OCI-LY7 (cell line): ENCODE measurements at regions of chr13 and their contacts with region 1.

Region 1: DNA sequence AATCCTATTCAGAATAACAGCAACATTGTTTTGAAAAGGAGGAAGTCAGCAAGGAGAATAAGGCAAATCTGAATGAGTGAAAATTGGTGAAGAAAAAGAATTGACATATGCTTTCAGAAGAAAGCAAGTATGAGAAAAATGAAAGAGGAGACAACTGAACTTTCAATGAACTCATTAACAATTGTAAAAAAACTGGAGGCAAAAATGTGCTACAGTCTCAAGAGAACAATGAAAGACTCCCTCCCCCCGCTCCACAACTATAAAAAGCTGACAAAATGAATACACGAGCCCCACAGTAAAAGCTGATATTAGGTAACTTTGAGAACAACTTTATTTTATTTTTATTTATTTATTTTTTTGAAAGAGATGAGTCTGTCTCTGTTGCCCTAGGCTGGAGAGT is 373.1 kb downstream of the DIAPH3 start:
- DNase-seq: no peak
- H3K4me3 ChIP-seq: no peak overlapping the region
- H3K27ac ChIP-seq: no peak overlapping the region
- H3K4me1 ChIP-seq: no peaks in the 10 kb centered on the region
- CTCF ChIP-seq: no peak

Region 2: DNA sequence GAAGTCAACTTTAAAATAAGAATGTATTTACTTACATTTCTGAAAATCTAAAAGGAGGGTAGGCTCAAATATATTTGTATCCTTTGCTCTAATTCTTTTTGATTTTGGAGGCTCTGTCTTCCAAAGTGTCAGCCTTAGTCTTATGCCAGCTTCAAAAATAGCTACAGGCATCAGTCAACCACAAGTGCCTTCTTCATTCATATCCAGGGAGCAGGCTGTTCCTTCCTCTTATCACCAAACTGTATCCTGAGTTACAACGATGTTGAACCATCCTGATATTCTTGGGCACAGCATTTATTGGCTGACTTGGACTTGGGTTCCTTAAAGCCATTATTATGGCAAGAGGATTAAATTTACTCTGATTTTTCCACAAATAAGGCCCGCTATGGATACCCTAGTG is 997.8 kb before region 1 on chr13:
- CTCF ChIA-PET with region 1: no interaction called
- POLR2A ChIA-PET with region 1: no interaction called
- intact Hi-C with region 1: no loop called
- DNase-seq: no peak
- H3K4me3 ChIP-seq: no peak overlapping the region
- H3K27ac ChIP-seq: no peak overlapping the region
- H3K4me1 ChIP-seq: no peaks in the 10 kb centered on the region
- CTCF ChIP-seq: no peak

Region 3: DNA sequence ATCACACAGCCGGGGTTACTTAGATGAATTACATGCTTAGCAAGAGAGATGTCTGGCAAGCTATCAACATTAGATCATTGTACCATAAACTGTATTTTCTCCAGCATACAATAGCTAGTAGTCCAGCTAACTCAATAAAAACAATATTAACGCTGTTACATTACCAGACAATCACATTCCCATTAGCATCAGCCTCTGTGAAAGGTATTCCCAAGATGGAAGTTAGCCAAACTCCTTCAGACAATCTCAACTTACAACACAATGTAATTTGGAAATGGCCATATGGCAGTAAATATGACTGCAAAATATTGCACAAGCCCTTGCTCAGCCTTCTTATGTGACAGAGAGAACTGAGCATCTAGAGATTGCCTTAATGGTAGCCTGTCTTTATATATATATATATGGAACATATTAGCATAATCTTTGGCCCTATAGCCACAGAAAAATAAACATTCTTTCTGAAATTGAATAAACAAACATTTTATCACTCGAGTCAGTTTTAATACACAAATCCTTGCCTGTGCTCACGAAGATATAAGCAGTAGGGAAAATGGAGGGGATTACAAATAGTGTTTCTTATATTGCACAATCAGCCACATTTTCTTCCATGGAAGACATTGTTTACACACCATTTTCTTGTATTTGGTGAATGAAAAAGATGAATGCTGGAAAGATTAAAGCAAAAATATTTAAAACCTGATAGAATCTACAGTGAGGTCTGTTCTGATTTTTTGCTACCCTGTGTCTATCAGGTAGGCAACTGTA is 687.4 kb before region 1 on chr13:
- CTCF ChIA-PET with region 1: no interaction called
- POLR2A ChIA-PET with region 1: no interaction called
- intact Hi-C with region 1: no loop called
- DNase-seq: no peak
- H3K4me3 ChIP-seq: no peak overlapping the region
- H3K27ac ChIP-seq: no peak overlapping the region
- H3K4me1 ChIP-seq: no peaks in the 10 kb centered on the region
- CTCF ChIP-seq: no peak

Region 4: DNA sequence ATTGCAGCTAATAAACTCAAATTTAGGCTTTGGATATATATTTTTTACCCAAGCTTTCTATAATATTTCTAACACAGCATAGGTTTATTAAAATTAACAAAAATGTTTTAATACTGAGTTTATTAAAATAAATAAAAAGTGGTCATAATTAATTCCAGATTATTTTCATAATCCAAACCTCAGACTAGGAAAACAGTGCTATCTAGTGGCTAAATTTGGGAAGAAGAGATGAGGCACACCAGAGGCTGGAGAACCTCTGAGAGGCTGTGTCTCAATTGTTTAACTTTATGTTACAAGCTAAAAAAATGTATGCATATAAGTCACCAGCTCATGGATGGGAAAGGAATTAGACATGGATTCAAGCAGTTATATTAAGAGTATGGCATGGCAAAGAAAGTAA is 19.4 kb before region 1 on chr13:
- CTCF ChIA-PET with region 1: no interaction called
- POLR2A ChIA-PET with region 1: interaction called, 8 read pairs
- intact Hi-C with region 1: loop called (anchors 2 kb)
- DNase-seq: no peak
- H3K4me3 ChIP-seq: no peak overlapping the region
- H3K27ac ChIP-seq: no peak overlapping the region
- H3K4me1 ChIP-seq: no peaks in the 10 kb centered on the region
- CTCF ChIP-seq: peak; percentile 62